Sigmoid colon (tissue), 7 donors: ENCODE measurements at regions of chr11 and their contacts with region 1.

Region 1: GRCh38 chr11:64317957-64318693 is at the start of gene PRDX5:
- DNase-seq: peak; percentile 99
- H3K4me3 ChIP-seq: peak within 1 kb of the TSS; percentile 83 to 98 (median 86)
- H3K27ac ChIP-seq: peak within 1 kb of the TSS; percentile 98 to 99 (median 98)
- H3K4me1 ChIP-seq: peaks cover 0 to 24% (median 22%) of the 10 kb centered on the region in 4 donors
- H3K27me3 ChIP-seq: no peaks in the 10 kb centered on the region
- CTCF ChIP-seq: peak in 1 of 4 experiments; percentile 11
- EP300 ChIP-seq: no peak
- POLR2A ChIP-seq: peak; percentile 87 to 94
- total RNA-seq, gene PRDX5: 169 to 269 (median 215) TPM

Region 2: DNA sequence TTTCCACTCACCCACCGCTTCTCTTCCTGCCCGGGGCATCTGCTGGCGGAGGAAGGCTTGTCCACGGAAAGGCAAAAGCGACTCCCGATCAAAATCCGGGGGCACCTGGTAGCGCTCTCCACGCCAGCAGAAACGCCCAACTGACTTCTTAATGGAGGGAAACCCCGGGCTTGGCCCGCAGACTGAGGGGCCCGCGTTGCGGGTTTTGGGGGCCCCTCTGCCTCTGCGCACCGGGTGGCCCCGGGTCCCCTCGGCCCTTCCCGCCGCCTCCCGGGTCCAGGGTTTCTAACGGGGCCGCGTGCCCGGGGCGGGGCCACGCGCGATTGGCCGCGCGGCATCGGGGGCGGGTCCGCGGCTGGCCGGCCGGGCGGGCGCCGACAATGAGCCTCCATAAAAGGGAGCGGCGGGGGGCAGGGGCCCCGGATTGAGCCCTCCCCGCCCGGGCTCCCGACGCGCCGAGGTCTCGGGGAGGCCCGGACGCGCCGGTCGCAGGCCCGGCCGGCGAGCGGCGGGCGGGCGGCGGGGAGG is 505.0 kb before region 1 on chr11 and contains the start of gene SPINDOC:
- intact Hi-C with region 1: no loop called
- DNase-seq: peak; percentile 90
- H3K4me3 ChIP-seq: peak within 1 kb of the TSS; percentile 92 to 98 (median 94)
- H3K27ac ChIP-seq: peak within 1 kb of the TSS; percentile 83 to 95 (median 91)
- H3K4me1 ChIP-seq: peaks cover 0 to 32% (median 27%) of the 10 kb centered on the region in 4 donors
- H3K27me3 ChIP-seq: no peaks in the 10 kb centered on the region
- CTCF ChIP-seq: no peak
- EP300 ChIP-seq: no peak
- POLR2A ChIP-seq: no peak
- total RNA-seq, gene SPINDOC: 12.2 to 15.2 (median 14.1) TPM

Region 3: DNA sequence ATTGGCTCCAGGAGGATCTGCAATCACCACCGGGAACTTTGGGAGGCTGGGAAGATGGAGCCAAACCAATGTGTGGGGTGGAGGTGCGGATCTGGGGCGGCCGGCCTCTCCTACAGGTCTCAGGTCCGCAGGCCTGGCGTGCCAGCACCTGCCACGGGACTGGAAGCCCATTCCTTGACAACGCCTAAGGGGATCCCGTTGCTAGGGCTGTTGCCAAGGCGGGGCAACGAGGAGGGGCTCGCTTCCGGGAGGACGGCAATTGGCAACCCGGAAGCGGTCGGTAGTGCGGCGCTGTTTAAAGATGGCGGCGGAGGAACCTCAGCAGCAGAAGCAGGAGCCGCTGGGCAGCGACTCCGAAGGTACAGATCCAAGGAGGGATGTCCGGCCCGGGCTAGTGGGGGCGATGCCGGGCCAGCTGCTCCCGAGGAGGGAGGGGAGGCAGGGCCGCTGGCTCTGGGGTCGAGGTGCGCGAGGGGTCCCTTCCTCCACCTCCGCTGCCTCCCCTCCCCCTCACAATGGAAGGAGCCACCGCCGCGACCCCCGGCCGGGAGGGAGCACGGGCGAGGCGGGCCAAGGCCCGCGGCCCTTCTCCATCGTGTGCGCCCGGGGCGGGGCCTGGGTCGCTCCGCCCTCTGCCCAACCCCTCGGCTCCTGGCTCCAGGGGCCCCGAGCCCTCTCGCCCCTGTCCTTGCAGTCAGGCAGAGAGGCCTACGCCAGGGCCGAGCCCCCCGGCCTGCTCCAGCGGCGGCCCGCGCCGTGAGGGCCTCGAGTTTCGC is 331.8 kb before region 1 on chr11 and contains the start of gene OTUB1:
- intact Hi-C with region 1: no loop called
- DNase-seq: peak; percentile 95
- H3K4me3 ChIP-seq: peak within 1 kb of the TSS; percentile 64 to 95 (median 94)
- H3K27ac ChIP-seq: peak within 1 kb of the TSS; percentile 86 to 88 (median 88)
- H3K4me1 ChIP-seq: peaks cover 0 to 30% (median 23%) of the 10 kb centered on the region in 4 donors
- H3K27me3 ChIP-seq: no peaks in the 10 kb centered on the region
- CTCF ChIP-seq: no peak
- EP300 ChIP-seq: no peak
- POLR2A ChIP-seq: peak in 1 of 2 donors; percentile 46
- total RNA-seq, gene OTUB1: 44.8 to 61.7 (median 57.8) TPM

Region 4: GRCh38 chr11:64341851-64342791 is 24.0 kb after region 1 on chr11:
- intact Hi-C with region 1: loop called (anchors 2 kb)
- DNase-seq: peak; percentile 94
- H3K4me3 ChIP-seq: peak overlapping the region; percentile 9 to 44 (median 39)
- H3K27ac ChIP-seq: peak overlapping the region; percentile 78 to 84 (median 82)
- H3K4me1 ChIP-seq: peaks cover 0 to 24% (median 12%) of the 10 kb centered on the region in 4 donors
- H3K27me3 ChIP-seq: no peaks in the 10 kb centered on the region
- CTCF ChIP-seq: peak; percentile 8 to 56 (median 46)
- EP300 ChIP-seq: no peak
- POLR2A ChIP-seq: peak in 1 of 2 donors; percentile 29

Region 5: GRCh38 chr11:64355078-64355940 is 37.2 kb after region 1 on chr11:
- intact Hi-C with region 1: loop called (anchors 1 kb)
- DNase-seq: peak; percentile 89
- H3K4me3 ChIP-seq: peak overlapping the region in 3 of 4 donors; percentile 5 to 32 (median 28)
- H3K27ac ChIP-seq: peak overlapping the region in 3 of 4 donors; percentile 17 to 62 (median 56)
- H3K4me1 ChIP-seq: peaks cover 0 to 41% (median 35%) of the 10 kb centered on the region in 4 donors
- H3K27me3 ChIP-seq: no peaks in the 10 kb centered on the region
- CTCF ChIP-seq: peak; percentile 47 to 69 (median 65)
- EP300 ChIP-seq: no peak
- POLR2A ChIP-seq: no peak

Region 6: DNA sequence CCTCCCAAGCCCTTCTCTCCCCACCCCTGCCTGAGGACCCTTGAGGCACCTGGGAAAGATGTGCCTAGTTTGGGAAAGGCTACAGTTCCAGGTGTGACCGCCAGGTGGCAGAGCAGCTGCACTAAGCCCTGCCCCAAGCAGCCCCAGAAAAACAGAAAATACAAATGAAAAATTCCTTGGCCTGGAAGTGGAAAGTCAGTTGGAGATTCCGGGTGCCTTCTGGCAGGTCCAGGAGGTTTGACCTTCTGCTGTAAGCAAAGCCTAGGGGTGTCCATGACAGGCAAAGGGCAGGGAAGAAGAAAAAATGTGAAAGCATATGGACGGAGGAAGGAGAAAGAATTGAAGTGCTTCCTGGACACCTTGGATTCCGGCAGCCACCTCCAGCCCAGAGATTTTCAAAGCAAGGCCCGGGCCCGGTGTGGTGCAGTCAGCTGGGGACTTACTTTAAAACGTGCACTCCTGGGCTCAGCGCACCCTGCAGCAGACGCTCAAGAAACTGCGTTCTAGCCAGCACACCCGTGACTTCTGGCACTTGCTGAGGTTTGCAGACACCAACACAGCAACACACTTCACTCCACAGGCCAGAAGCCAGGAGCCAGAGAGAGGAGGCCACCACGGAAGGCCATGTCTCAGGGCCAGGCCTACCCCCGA is 235.6 kb after region 1 on chr11:
- intact Hi-C with region 1: no loop called
- DNase-seq: peak; percentile 93
- H3K4me3 ChIP-seq: no peak overlapping the region
- H3K27ac ChIP-seq: peak overlapping the region; percentile 57 to 81 (median 68)
- H3K4me1 ChIP-seq: peaks cover 0 to 28% (median 20%) of the 10 kb centered on the region in 4 donors
- H3K27me3 ChIP-seq: no peaks in the 10 kb centered on the region
- CTCF ChIP-seq: peak; percentile 95 to 99 (median 98)
- EP300 ChIP-seq: no peak
- POLR2A ChIP-seq: no peak